B cell (primary cell): ENCODE measurements at regions of chr11 and their contacts with region 1.

Region 1: DNA sequence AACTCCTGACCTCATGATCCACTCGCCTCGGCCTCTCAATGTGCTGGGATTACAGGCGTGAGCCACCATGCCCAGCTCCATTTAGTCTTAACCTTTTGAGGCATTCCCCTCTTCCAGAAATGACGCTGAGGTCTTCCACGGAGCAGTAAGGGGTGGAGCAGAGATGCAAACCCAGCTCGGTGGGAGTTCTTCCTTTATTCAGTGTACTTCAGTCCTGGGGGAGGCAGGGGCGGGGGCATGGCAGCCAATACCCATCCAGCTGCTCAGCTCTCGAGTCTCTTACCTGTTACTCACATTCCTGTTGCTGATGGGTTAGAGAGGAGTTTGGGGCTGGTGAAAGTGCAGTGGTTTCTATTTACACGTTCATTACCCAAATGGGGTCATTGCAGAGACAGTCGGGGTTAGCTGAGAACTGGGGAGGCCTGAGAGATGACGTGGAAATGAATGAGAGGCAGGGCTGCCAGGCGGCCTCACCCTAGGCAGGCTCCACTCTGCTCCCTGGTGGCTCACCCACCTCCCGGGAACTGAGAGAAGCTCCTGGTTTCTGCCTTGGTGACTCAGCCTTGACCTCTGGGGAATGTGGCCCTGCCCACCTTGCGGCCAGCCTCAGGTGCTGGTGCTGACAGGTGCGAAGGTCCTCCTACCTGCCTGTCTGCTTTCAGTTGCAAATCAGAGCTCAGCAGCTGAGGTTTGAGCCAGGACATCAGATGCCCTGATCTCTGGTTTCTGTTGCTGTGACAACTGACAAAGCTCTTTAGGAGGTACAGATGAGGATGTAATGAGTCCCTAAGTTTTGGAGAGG is 13.4 kb upstream of the ST14 start:
- DNase-seq: no peak
- ATAC-seq: peak; percentile 23
- H3K4me3 ChIP-seq: no peak overlapping the region
- H3K4me3 Mint-ChIP-seq: peak overlapping the region; percentile 30
- H3K27ac ChIP-seq: peak overlapping the region; percentile 61 to 75
- H3K27ac Mint-ChIP-seq: peak overlapping the region; percentile 68
- H3K4me1 ChIP-seq: peaks cover 16 to 34% of the 10 kb centered on the region in 2 donors
- H3K4me1 Mint-ChIP-seq: peaks cover 37% of the 10 kb centered on the region
- H3K27me3 ChIP-seq: no peaks in the 10 kb centered on the region
- H3K27me3 Mint-ChIP-seq: no peaks in the 10 kb centered on the region
- CTCF ChIP-seq: no peak

Region 2: DNA sequence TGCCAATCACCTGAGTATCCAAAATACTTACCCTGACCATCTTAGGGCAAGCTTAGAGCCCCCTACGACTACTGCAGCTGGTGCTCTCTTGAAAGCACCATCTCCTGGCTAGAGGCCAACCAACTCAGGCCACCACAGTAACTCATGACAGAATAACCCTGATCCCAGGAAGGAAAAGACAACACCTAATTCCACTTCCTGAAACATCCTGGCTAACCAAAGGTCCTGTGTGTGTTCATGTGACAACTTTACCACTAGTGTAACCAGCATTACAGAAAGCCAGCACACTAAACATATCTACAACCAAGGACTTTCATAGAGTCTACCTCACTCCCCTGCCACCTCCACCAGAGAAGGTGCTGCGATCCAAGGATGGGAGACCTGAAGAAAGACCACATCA is 348.0 kb before region 1 on chr11:
- CTCF ChIA-PET with region 1: no interaction called
- POLR2A ChIA-PET with region 1: no interaction called
- intact Hi-C with region 1: no loop called
- DNase-seq: no peak
- ATAC-seq: no peak
- H3K4me3 ChIP-seq: no peak overlapping the region
- H3K4me3 Mint-ChIP-seq: no peak overlapping the region
- H3K27ac ChIP-seq: no peak overlapping the region
- H3K27ac Mint-ChIP-seq: no peak overlapping the region
- H3K4me1 ChIP-seq: no peaks in the 10 kb centered on the region
- H3K4me1 Mint-ChIP-seq: no peaks in the 10 kb centered on the region
- H3K27me3 ChIP-seq: no peaks in the 10 kb centered on the region
- H3K27me3 Mint-ChIP-seq: peaks cover 34% of the 10 kb centered on the region
- CTCF ChIP-seq: no peak

Region 3: DNA sequence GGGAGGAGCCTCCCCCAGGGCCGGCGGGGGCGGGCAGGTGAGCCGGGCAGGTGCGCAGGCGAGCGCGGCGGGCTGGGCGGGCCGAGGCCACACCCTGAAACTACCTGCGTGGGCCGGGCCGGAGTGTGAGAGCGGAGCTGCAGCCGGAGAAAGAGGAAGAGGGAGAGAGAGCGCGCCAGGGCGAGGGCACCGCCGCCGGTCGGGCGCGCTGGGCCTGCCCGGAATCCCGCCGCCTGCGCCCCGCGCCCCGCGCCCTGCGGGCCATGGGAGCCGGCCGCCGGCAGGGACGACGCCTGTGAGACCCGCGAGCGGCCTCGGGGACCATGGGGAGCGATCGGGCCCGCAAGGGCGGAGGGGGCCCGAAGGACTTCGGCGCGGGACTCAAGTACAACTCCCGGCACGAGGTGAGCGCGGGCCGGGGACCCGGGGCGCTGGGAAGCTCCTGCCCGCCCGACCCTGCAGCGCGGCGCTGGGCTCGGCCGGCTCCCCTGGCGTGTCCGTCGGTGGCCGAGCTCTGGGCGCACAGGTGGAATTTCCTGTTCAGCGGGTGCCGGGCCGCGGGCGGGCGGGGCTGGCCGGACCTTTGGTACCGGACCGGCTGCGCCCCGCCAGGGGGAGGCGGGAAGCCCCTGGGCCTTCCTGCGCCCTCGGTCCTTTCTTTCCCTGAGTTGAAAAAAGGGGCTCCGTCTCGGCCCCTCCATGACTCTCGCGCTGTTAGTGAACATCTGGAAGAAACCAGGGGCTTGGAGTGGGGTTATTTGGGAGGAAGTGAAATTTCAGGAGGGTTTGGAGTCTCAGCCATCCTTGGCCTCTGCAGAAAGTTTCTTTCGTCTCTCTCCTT is 13.7 kb after region 1 on chr11 and contains the start of gene ST14:
- CTCF ChIA-PET with region 1: interaction called, 13 read pairs
- POLR2A ChIA-PET with region 1: interaction called, 8 read pairs
- intact Hi-C with region 1: loop called (anchors 2 kb)
- DNase-seq: peak; percentile 75
- ATAC-seq: peak; percentile 83
- H3K4me3 ChIP-seq: peak within 1 kb of the TSS; percentile 38 to 82 (median 54)
- H3K4me3 Mint-ChIP-seq: peak within 1 kb of the TSS; percentile 94
- H3K27ac ChIP-seq: no peak within 1 kb of the TSS
- H3K27ac Mint-ChIP-seq: peak within 1 kb of the TSS; percentile 87
- H3K4me1 ChIP-seq: peaks cover 33 to 51% of the 10 kb centered on the region in 2 donors
- H3K4me1 Mint-ChIP-seq: peaks cover 58% of the 10 kb centered on the region
- H3K27me3 ChIP-seq: no peaks in the 10 kb centered on the region
- H3K27me3 Mint-ChIP-seq: no peaks in the 10 kb centered on the region
- CTCF ChIP-seq: no peak
- total RNA-seq, gene ST14: 52.2 TPM in 2 replicates

Region 4: GRCh38 chr11:130166457-130166784 is 20.2 kb after region 1 on chr11:
- CTCF ChIA-PET with region 1: interaction called, 13 read pairs
- POLR2A ChIA-PET with region 1: interaction called, 4 read pairs
- intact Hi-C with region 1: loop called (anchors 2 kb)
- DNase-seq: peak; percentile 83
- ATAC-seq: peak; percentile 83
- H3K4me3 ChIP-seq: no peak overlapping the region
- H3K4me3 Mint-ChIP-seq: peak overlapping the region; percentile 82
- H3K27ac ChIP-seq: peak overlapping the region; percentile 54 to 77
- H3K27ac Mint-ChIP-seq: peak overlapping the region; percentile 95
- H3K4me1 ChIP-seq: peaks cover 41 to 73% of the 10 kb centered on the region in 2 donors
- H3K4me1 Mint-ChIP-seq: peaks cover 86% of the 10 kb centered on the region
- H3K27me3 ChIP-seq: no peaks in the 10 kb centered on the region
- H3K27me3 Mint-ChIP-seq: no peaks in the 10 kb centered on the region
- CTCF ChIP-seq: no peak

Region 5: DNA sequence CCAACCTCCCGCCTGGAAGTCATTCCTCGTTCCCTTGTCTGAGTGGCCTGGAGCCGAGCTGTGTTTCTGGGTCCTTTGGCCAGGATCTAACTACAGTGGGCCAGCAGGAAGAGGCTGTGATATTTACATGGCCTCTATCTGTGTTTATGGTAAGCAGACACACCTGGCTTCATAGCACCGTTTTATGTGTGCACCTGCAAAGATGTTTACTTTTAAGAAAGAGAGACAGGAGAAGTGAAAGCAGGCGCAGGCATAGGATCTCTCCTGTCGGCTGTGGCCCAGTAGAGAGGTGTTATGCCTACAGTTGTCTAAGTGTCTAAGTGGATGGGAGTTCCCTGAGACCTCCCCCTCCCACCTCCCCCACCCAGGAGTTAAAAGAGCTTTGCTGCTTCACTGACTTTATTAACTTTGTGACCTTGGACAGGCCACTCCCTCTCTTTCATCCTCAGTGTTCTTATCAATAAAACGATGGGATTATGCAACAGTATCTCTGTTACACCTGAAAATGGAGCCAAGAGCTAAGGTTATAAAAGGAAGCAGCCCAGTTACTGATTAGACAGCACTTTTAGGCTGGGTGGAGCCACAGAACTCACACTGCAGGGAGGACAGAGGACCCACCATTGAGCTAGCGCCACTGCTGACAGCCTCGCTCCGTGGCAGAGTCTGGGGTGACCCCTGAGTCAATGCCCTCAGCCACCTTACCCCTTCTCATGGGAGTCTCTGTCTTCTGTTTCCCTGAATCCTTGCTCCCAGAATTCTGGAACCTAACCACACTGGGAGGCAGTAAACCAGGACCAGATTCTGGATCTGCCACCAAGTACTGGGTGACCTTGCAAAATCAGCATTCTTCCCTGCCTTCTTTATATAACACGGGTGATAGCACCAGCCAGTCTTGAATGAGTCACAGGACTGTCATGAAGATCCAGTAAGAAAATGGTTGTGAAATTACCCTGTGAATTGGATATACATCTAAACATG is 35.4 kb after region 1 on chr11:
- CTCF ChIA-PET with region 1: interaction called, 3 read pairs
- POLR2A ChIA-PET with region 1: interaction called, 8 read pairs
- intact Hi-C with region 1: loop called (anchors 1 kb)
- DNase-seq: peak; percentile 79
- ATAC-seq: peak; percentile 84
- H3K4me3 ChIP-seq: no peak overlapping the region
- H3K4me3 Mint-ChIP-seq: peak overlapping the region; percentile 61
- H3K27ac ChIP-seq: peak overlapping the region; percentile 74 to 76
- H3K27ac Mint-ChIP-seq: peak overlapping the region; percentile 94
- H3K4me1 ChIP-seq: peaks cover 42 to 56% of the 10 kb centered on the region in 2 donors
- H3K4me1 Mint-ChIP-seq: peaks cover 56% of the 10 kb centered on the region
- H3K27me3 ChIP-seq: no peaks in the 10 kb centered on the region
- H3K27me3 Mint-ChIP-seq: no peaks in the 10 kb centered on the region
- CTCF ChIP-seq: no peak